ENCODE measurements at regions of chr1 and their contacts with region 1.

Region 1: GRCh38 chr1:92583821-92584760 is 97.4 kb upstream of the GFI1 start:
- DNase-seq: no peak
- H3K4me3 Mint-ChIP-seq: peak overlapping the region; percentile 55
- H3K27ac Mint-ChIP-seq: peak overlapping the region; percentile 88
- H3K4me1 Mint-ChIP-seq: peaks cover 60% of the 10 kb centered on the region
- H3K27me3 Mint-ChIP-seq: no peaks in the 10 kb centered on the region

Region 2: DNA sequence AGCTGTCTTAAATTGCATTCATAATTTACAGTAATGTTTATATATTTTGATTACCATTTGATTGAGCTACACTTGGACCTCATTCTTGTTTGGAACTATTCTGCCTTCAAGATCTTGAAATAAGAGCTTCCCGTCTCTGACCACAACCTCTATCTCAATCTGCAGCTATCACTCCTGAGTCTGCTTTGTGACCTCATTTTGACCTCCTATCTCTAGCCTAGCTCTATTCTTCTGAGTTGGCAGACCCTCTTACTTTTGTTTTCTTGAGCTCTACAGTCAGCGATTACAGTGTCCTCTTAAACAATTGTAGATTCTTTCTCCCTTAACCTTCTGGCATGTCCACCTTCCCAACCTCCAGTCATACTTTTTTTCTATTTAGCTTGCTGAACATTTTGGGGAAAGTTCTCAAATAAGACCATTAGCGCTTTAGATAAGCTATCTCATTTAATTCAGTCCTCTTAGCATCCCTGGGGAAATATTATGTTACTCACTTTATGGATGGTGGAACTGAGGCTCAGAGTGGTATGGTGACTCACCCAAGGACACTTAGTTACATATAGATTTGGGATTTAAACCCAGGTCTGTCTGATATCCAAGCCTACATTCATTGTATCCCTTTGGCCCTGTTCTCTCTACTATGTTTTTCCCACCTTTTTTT is 266.1 kb before region 1 on chr1:
- intact Hi-C with region 1: loop called (anchors 2 kb)
- DNase-seq: peak; percentile 23
- H3K4me3 Mint-ChIP-seq: peak overlapping the region; percentile 49
- H3K27ac Mint-ChIP-seq: peak overlapping the region; percentile 72
- H3K4me1 Mint-ChIP-seq: peaks cover 55% of the 10 kb centered on the region
- H3K27me3 Mint-ChIP-seq: no peaks in the 10 kb centered on the region

Region 3: DNA sequence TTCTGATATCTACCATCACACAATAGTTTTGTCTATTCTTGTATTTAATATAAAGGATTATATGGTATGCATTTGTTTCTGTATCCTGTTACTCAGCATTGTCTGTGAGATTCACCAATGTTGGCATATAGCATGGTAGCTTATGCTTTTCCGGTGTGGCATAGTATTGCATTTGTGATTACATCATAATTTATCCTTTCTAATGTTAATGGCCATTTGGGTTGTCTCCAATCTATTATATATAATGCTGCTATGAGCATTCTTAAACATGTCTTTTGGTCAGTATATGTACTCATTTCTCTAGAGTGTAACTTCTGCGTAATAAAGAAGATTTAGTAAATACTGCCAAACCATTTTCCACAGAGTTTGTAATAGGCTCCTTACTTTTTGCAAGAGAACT is 56.4 kb before region 1 on chr1:
- intact Hi-C with region 1: no loop called
- DNase-seq: no peak
- H3K4me3 Mint-ChIP-seq: no peak overlapping the region
- H3K27ac Mint-ChIP-seq: no peak overlapping the region
- H3K4me1 Mint-ChIP-seq: peaks cover 48% of the 10 kb centered on the region
- H3K27me3 Mint-ChIP-seq: no peaks in the 10 kb centered on the region

Region 4: DNA sequence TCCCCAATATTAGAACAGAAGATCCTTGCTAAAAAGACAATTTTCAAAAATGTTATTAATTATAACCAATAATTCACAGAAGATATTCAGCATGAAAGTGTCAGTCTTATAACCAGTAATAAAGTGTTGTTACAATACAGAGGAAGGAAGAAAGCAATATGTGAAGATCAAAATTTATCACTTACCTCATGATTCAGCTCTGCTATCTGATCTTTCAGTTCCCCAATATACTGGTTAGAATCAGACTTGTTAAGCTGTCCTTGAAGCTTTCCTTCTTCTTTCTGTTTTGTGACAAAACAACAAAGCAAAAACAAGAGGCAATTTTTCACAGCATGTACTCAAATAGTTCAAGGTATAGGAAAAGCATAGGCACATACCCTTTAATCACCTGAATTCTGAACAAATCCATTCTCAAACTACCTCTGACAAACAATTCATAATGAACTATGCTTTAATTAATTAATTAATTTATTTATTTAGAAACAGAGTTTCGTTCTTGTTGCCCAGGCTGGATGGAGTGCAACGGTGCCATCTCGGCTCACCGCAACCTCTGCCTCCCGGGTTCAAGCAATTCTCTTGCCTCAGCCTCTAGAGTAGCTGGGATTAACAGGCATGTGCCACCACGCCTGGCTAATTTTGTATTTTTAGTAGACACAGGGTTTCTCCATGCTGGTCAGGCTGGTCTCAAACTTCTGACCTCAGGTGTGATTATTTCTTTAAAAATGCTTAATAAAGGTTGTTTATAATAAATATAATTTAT is 20.5 kb before region 1 on chr1:
- intact Hi-C with region 1: loop called (anchors 1 kb)
- DNase-seq: no peak
- H3K4me3 Mint-ChIP-seq: peak overlapping the region; percentile 7
- H3K27ac Mint-ChIP-seq: peak overlapping the region; percentile 65
- H3K4me1 Mint-ChIP-seq: peaks cover 59% of the 10 kb centered on the region
- H3K27me3 Mint-ChIP-seq: no peaks in the 10 kb centered on the region

Region 5: DNA sequence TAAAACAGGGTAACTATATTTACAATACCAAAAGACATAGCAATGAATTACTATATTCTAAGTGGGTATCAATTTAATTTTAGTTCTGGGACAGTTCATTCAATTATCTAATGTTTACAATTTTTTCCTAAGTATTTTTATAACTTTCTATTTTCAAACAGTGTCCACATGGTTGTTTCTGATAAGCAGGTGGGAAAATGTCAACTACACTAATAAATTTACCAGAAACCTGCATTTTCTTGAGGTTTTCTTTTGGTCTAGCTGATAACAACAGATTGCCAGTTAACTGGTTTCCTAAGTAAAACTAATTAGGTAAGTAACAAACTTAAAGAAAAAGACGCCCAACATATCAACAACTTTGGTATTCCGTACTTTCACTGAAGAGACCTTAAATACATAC is 12.5 kb before region 1 on chr1:
- intact Hi-C with region 1: loop called (anchors 1 kb)
- DNase-seq: no peak
- H3K4me3 Mint-ChIP-seq: peak overlapping the region; percentile 77
- H3K27ac Mint-ChIP-seq: peak overlapping the region; percentile 83
- H3K4me1 Mint-ChIP-seq: peaks cover 62% of the 10 kb centered on the region
- H3K27me3 Mint-ChIP-seq: no peaks in the 10 kb centered on the region